Heart left ventricle (tissue), 16 donors: ENCODE measurements at regions of chr5 and their contacts with region 1.

Region 1: GRCh38 chr5:63963080-63963735 is 963 bp upstream of the HTR1A start:
- DNase-seq: peak in 1 of 5 donors; percentile 16
- ATAC-seq: peak in 2 of 4 donors; percentile 39 to 43
- H3K4me3 ChIP-seq: no peak overlapping the region
- H3K27ac ChIP-seq: no peak overlapping the region
- H3K4me1 ChIP-seq: no peaks in the 10 kb centered on the region
- H3K27me3 ChIP-seq: peaks cover 18 to 52% (median 45%) of the 10 kb centered on the region in 9 donors
- CTCF ChIP-seq: peak in 11 of 12 donors; percentile 24 to 70 (median 49)
- POLR2A ChIP-seq: no peak

Region 2: GRCh38 chr5:63401436-63402046 is 561.7 kb before region 1 on chr5:
- intact Hi-C with region 1: loop called (anchors 1 to 5 kb)
- DNase-seq: peak; percentile 21 to 58 (median 34)
- ATAC-seq: peak in 3 of 4 donors; percentile 65 to 69 (median 69)
- H3K4me3 ChIP-seq: no peak overlapping the region
- H3K27ac ChIP-seq: no peak overlapping the region
- H3K4me1 ChIP-seq: no peaks in the 10 kb centered on the region
- H3K27me3 ChIP-seq: peaks cover 0 to 6% (median 0%) of the 10 kb centered on the region in 9 donors
- CTCF ChIP-seq: peak; percentile 44 to 84 (median 70)
- POLR2A ChIP-seq: no peak

Region 3: GRCh38 chr5:64003966-64004365 is 40.8 kb after region 1 on chr5:
- intact Hi-C with region 1: loop called in 1 of 10 experiments (anchors 1 kb)
- DNase-seq: no peak
- ATAC-seq: no peak
- H3K4me3 ChIP-seq: no peak overlapping the region
- H3K27ac ChIP-seq: no peak overlapping the region
- H3K4me1 ChIP-seq: no peaks in the 10 kb centered on the region
- H3K27me3 ChIP-seq: no peaks in the 10 kb centered on the region
- CTCF ChIP-seq: no peak
- POLR2A ChIP-seq: no peak

Region 4: GRCh38 chr5:64331597-64332277 is 368.5 kb after region 1 on chr5:
- intact Hi-C with region 1: no loop called
- DNase-seq: peak; percentile 46 to 82 (median 78)
- ATAC-seq: peak; percentile 90 to 97 (median 94)
- H3K4me3 ChIP-seq: no peak overlapping the region
- H3K27ac ChIP-seq: peak overlapping the region in 5 of 12 donors; percentile 21 to 64 (median 53)
- H3K4me1 ChIP-seq: peaks cover 0 to 24% (median 5%) of the 10 kb centered on the region in 12 donors
- H3K27me3 ChIP-seq: no peaks in the 10 kb centered on the region
- CTCF ChIP-seq: no peak
- POLR2A ChIP-seq: no peak